Right lobe of liver (tissue), 6 donors: ENCODE measurements at regions of chr5 and their contacts with region 1.

Region 1: GRCh38 chr5:932628-933250 is 40.1 kb downstream of the TRIP13 start:
- DNase-seq: peak in 1 of 3 donors; percentile 23
- ATAC-seq: no peak
- H3K4me3 ChIP-seq: no peak overlapping the region
- H3K27ac ChIP-seq: no peak overlapping the region
- H3K4me1 ChIP-seq: no peaks in the 10 kb centered on the region
- H3K27me3 ChIP-seq: no peaks in the 10 kb centered on the region
- CTCF ChIP-seq: no peak
- POLR2A ChIP-seq: no peak

Region 2: GRCh38 chr5:982377-983237 is 49.9 kb after region 1 on chr5:
- intact Hi-C with region 1: no loop called
- DNase-seq: peak in 1 of 3 donors; percentile 46
- ATAC-seq: peak in 3 of 4 donors; percentile 43 to 70 (median 66)
- H3K4me3 ChIP-seq: no peak overlapping the region
- H3K27ac ChIP-seq: no peak overlapping the region
- H3K4me1 ChIP-seq: no peaks in the 10 kb centered on the region
- H3K27me3 ChIP-seq: no peaks in the 10 kb centered on the region
- CTCF ChIP-seq: peak in 1 of 4 donors; percentile 10
- POLR2A ChIP-seq: no peak

Region 3: DNA sequence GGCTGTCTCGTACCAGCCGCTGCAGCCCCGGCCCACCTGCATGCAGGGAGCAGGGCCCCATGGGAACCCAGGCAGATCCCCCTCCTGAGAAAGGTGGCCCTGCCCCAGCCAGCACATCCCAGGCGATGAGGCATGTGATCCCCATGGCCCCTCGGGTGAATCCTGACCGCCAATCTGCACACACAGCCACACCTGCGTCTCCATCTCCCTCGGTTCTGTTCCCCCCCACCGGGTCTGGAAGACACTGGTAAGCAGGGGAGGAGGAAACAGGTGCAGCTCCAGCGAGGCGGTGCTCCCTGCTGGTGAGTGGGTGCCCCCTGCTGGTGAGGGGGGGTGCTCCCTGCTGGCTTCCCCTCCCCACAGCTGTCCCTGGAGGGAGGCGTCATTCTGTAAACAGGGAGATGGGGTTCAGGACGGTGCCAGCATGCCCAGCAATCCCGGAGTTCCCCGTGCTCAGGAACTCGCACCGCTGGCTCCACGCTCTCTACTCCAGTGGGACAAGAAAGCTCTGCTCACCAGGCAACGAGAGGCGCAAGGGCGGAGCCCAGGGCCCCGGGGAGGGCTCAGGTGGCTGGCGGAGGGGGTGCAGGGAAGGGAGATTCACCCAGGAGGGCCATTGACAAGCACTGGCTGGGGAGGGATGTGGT is 207.6 kb after region 1 on chr5:
- intact Hi-C with region 1: loop called in 1 of 2 experiments (anchors 10 kb)
- DNase-seq: peak; percentile 88 to 91 (median 89)
- ATAC-seq: peak; percentile 92 to 94 (median 94)
- H3K4me3 ChIP-seq: no peak overlapping the region
- H3K27ac ChIP-seq: no peak overlapping the region
- H3K4me1 ChIP-seq: peaks cover 0 to 5% (median 0%) of the 10 kb centered on the region in 4 donors
- H3K27me3 ChIP-seq: no peaks in the 10 kb centered on the region
- CTCF ChIP-seq: peak; percentile 93 to 96 (median 95)
- POLR2A ChIP-seq: no peak

Region 4: GRCh38 chr5:1167728-1168709 is 235.3 kb after region 1 on chr5:
- intact Hi-C with region 1: loop called (anchors 5 to 10 kb)
- DNase-seq: peak; percentile 71 to 81 (median 74)
- ATAC-seq: peak; percentile 90 to 95 (median 94)
- H3K4me3 ChIP-seq: no peak overlapping the region
- H3K27ac ChIP-seq: no peak overlapping the region
- H3K4me1 ChIP-seq: peaks cover 0 to 8% (median 0%) of the 10 kb centered on the region in 4 donors
- H3K27me3 ChIP-seq: no peaks in the 10 kb centered on the region
- CTCF ChIP-seq: peak; percentile 59 to 80 (median 66)
- POLR2A ChIP-seq: no peak